HAP-1 (cell line): ENCODE measurements at regions of chr12 and their contacts with region 1.

Region 1: GRCh38 chr12:7661741-7662140 is 4.0 kb downstream of the APOBEC1 start:
- DNase-seq: peak in 1 of 2 experiments; percentile 71
- H3K4me3 ChIP-seq: no peak overlapping the region
- H3K4me1 ChIP-seq: no peaks in the 10 kb centered on the region
- H3K27me3 ChIP-seq: no peaks in the 10 kb centered on the region

Region 2: GRCh38 chr12:7806863-7807487 is 145.2 kb after region 1 on chr12:
- in situ Hi-C with region 1: loop called (anchors 5 kb)
- DNase-seq: peak; percentile 82 to 89
- H3K4me3 ChIP-seq: no peak overlapping the region
- H3K4me1 ChIP-seq: no peaks in the 10 kb centered on the region
- H3K27me3 ChIP-seq: no peaks in the 10 kb centered on the region